Activated CD4-positive, alpha-beta T cell treated with anti-CD3 and anti-CD28 coated beads, Interleukin-2, amount 10 ng/mL, durations not matched to agents 7 days and 5 days (primary cell): ENCODE measurements at regions of chr11 and their contacts with region 1.

Region 1: GRCh38 chr11:77047007-77047927 is 13.1 kb downstream of the B3GNT6 start:
- DNase-seq: peak; percentile 91
- H3K4me3 Mint-ChIP-seq: peak overlapping the region; percentile 56
- H3K27ac Mint-ChIP-seq: peak overlapping the region; percentile 44
- H3K4me1 Mint-ChIP-seq: peaks cover 17% of the 10 kb centered on the region
- H3K27me3 Mint-ChIP-seq: peaks cover 8% of the 10 kb centered on the region

Region 2: DNA sequence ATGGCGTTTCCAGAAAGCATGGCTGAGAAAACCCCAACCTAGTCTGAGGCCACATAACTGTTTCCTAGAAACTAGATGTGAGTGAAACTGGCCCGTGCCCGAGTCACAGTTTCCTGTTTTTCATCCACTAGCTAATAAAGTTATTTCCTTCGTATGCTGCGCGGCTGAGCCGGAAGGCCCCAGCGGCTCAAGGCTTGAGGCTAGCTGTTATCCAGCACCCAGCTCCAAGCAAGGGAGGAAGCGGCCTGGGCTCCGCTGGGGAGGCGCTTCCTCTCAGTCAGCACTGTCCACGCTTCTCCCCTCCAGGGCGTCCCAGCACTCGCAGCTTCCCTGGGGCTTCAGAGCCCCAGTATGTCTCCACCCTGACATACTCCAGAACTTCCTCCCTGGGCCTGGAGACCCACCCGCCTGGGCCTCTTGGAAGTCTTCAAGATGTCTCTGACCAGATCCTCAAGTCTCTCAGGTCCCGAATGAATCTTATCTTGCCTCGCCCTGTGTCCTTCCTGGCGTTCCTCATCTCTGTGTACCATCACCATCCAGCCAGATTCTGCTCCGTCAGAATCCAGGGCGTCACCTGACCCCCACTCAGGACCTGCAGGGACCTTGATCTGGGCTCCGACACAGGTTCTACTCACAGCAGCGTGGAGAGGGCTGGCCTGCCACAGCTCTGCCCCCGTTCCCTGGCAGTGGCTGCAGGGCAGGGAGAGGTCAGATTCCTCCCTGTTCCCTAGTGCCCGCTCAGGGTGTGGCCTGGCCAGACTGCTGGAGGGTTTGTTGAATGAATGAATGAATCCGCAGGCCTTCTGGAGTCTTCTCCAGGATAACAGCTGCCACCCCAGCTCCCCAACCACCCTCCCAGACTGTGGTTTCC is 458.6 kb before region 1 on chr11:
- CTCF ChIA-PET with region 1: no interaction called
- POLR2A ChIA-PET with region 1: no interaction called
- DNase-seq: peak; percentile 44
- H3K4me3 Mint-ChIP-seq: no peak overlapping the region
- H3K27ac Mint-ChIP-seq: peak overlapping the region; percentile 86
- H3K4me1 Mint-ChIP-seq: peaks cover 62% of the 10 kb centered on the region
- H3K27me3 Mint-ChIP-seq: peaks cover 2% of the 10 kb centered on the region

Region 3: DNA sequence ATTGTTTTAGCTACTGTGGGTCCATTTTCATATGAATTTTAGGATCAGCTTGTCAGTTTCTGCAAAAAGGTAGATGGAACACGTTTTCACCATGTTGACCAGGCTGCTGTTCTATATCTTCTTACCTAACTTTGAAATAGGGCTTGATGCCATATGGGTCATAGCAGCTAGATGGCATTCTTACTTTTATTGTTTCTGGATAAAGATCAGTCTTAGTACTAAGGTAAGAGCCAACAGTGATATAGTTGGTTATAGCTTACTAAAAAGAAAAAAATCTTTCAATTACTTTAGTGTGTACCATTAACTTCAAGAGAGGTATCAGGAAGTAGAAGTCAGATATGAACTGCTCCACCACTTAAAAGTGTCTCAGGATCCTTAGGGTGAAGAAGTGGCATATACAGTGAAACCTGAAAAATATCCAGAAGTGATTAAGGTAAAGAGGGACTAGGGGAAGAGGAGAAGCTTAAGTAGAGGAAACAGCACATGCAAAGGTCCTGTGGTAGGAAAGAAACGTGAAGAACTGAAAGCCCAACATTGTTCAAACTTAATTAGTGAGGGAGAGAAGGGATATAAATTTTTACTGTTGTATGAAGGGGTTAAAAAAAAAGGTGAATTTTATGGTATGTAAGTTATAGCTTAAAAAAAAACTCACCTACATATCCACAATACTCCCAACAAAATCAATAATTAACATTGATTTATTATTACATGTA is 72.9 kb before region 1 on chr11:
- CTCF ChIA-PET with region 1: no interaction called
- POLR2A ChIA-PET with region 1: no interaction called
- DNase-seq: no peak
- H3K4me3 Mint-ChIP-seq: no peak overlapping the region
- H3K27ac Mint-ChIP-seq: no peak overlapping the region
- H3K4me1 Mint-ChIP-seq: no peaks in the 10 kb centered on the region
- H3K27me3 Mint-ChIP-seq: no peaks in the 10 kb centered on the region

Region 4: DNA sequence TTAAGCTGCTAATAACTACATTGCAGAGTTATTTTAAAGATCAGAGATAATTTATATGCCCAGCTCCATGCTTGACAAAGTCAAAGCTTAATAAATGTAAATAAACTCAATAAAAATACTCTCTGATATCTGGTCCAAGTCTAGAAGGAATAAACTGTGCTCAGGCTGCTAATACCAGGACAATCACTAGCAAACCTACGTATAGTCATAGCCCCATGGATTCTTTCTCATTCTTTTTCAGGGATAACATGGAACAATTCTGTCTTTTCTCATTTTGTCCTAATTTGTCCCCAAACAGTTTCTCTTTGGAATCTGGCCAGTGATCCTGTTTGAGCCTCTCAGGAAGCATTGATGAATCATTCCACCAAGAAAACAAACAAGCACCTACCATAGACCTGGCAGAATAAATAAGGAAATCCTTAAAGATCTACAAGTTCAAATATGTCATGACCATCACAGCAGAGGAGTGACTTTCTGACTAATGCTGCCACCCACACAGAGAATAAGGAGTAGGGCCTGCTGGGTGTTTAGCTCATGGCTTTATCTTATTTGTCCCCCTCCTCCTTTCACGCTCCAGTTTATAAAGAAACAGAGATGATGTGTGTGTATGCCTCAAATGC is 27.2 kb before region 1 on chr11:
- CTCF ChIA-PET with region 1: no interaction called
- POLR2A ChIA-PET with region 1: interaction called, 12 read pairs
- DNase-seq: no peak
- H3K4me3 Mint-ChIP-seq: no peak overlapping the region
- H3K27ac Mint-ChIP-seq: no peak overlapping the region
- H3K4me1 Mint-ChIP-seq: peaks cover 11% of the 10 kb centered on the region
- H3K27me3 Mint-ChIP-seq: no peaks in the 10 kb centered on the region

Region 5: GRCh38 chr11:77030834-77031414 is 16.3 kb before region 1 on chr11:
- CTCF ChIA-PET with region 1: no interaction called
- POLR2A ChIA-PET with region 1: no interaction called
- DNase-seq: no peak
- H3K4me3 Mint-ChIP-seq: no peak overlapping the region
- H3K27ac Mint-ChIP-seq: no peak overlapping the region
- H3K4me1 Mint-ChIP-seq: no peaks in the 10 kb centered on the region
- H3K27me3 Mint-ChIP-seq: peaks cover 20% of the 10 kb centered on the region

Region 6: GRCh38 chr11:77091146-77091940 is 44.1 kb after region 1 on chr11:
- CTCF ChIA-PET with region 1: interaction called, 39 read pairs
- POLR2A ChIA-PET with region 1: no interaction called
- DNase-seq: peak; percentile 85
- H3K4me3 Mint-ChIP-seq: no peak overlapping the region
- H3K27ac Mint-ChIP-seq: no peak overlapping the region
- H3K4me1 Mint-ChIP-seq: peaks cover 8% of the 10 kb centered on the region
- H3K27me3 Mint-ChIP-seq: no peaks in the 10 kb centered on the region

Region 7: GRCh38 chr11:77101052-77101537 is 53.8 kb after region 1 on chr11:
- CTCF ChIA-PET with region 1: interaction called, 10 read pairs
- POLR2A ChIA-PET with region 1: no interaction called
- DNase-seq: peak; percentile 14
- H3K4me3 Mint-ChIP-seq: no peak overlapping the region
- H3K27ac Mint-ChIP-seq: no peak overlapping the region
- H3K4me1 Mint-ChIP-seq: no peaks in the 10 kb centered on the region
- H3K27me3 Mint-ChIP-seq: no peaks in the 10 kb centered on the region